PC-9 (cell line): ENCODE measurements at regions of chr3 and their contacts with region 1.

Region 1: GRCh38 chr3:195558602-195559001 is 15.5 kb upstream of the PPP1R2 start:
- DNase-seq: peak; percentile 51 to 80
- H3K4me3 ChIP-seq: no peak overlapping the region
- H3K27ac ChIP-seq: peak overlapping the region; percentile 64
- H3K4me1 ChIP-seq: peaks cover 34% of the 10 kb centered on the region
- H3K27me3 ChIP-seq: no peaks in the 10 kb centered on the region
- CTCF ChIP-seq: peak; percentile 74

Region 2: GRCh38 chr3:195542698-195543499 is 15.7 kb before region 1 on chr3 and contains the start of gene PPP1R2:
- CTCF ChIA-PET with region 1: interaction called, 5 read pairs
- POLR2A ChIA-PET with region 1: interaction called, 3 read pairs
- intact Hi-C with region 1: loop called (anchors 1 kb)
- DNase-seq: peak; percentile 80 to 95
- H3K4me3 ChIP-seq: peak within 1 kb of the TSS; percentile 78
- H3K27ac ChIP-seq: peak within 1 kb of the TSS; percentile 42
- H3K4me1 ChIP-seq: peaks cover 34% of the 10 kb centered on the region
- H3K27me3 ChIP-seq: no peaks in the 10 kb centered on the region
- CTCF ChIP-seq: no peak
- total RNA-seq, gene PPP1R2: 49.1 and 73.0 TPM in 2 replicates

Region 3: GRCh38 chr3:195591219-195591618 is 32.6 kb after region 1 on chr3:
- CTCF ChIA-PET with region 1: no interaction called
- POLR2A ChIA-PET with region 1: no interaction called
- intact Hi-C with region 1: no loop called
- DNase-seq: no peak
- H3K4me3 ChIP-seq: no peak overlapping the region
- H3K27ac ChIP-seq: no peak overlapping the region
- H3K4me1 ChIP-seq: 0 out of 2 replicates have a peak, but pooled peaks cover 6% of the 10 kb centered on the region
- H3K27me3 ChIP-seq: peaks cover 23% of the 10 kb centered on the region
- CTCF ChIP-seq: no peak

Region 4: DNA sequence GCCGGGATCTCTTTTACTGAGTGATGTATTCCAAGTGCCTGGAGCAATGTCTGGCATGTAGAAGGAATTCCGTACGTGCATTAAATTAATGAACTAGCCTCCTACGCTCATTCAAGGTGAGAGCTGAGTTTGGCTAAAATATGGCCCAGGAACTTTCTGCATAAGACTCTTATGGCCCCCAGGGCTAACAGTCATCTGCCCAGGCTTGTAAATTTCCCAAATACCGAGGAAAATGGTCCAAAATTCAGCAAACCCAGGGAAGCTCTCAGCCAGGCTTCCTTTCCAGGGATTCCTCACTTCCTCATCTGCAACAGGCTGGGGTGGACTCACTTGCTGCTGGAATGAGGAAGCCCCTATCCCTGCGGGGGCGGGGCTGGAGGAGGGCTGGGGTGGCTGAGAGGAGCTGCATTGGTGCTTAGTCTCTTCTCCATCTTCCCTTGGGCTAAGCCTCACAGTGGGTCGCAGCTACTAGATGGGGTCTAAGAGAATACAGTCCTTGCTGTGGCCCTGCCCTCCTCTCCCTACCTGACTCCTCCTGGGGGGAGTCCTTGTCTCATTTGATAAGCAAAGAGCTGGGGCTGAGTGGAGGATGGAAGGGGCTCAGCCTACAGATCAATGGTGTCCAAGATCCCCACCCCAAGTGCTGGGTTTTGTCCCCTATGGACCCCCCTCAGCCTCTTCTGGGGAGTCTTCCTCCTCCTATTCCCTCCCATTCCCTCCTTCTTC is 53.6 kb after region 1 on chr3:
- CTCF ChIA-PET with region 1: no interaction called
- POLR2A ChIA-PET with region 1: no interaction called
- intact Hi-C with region 1: loop called (anchors 2 kb)
- DNase-seq: no peak
- H3K4me3 ChIP-seq: no peak overlapping the region
- H3K27ac ChIP-seq: no peak overlapping the region
- H3K4me1 ChIP-seq: peaks cover 9% of the 10 kb centered on the region
- H3K27me3 ChIP-seq: no peaks in the 10 kb centered on the region
- CTCF ChIP-seq: no peak